RWPE1 (cell line): ENCODE measurements at regions of chr7 and their contacts with region 1.

Region 1: DNA sequence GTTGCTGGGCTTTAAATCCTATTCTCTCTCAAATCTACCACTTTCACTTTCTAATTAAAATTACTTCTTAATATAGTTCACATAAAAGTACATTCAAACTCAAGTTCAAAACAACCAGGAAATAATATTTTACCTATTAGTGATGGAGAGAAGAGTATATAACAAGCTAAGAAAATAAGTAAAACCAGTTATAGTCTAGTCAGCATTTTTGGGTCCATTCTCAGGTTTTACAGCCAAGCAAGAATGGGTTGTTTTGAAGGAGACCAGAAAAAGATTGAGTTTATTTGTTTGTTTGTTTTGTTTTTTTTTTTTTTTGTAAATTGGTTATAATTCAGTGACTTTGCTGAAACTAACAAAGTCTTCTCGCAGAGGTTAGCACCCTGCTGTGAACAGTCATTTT is 106.3 kb upstream of the PTPRZ1 start:
- DNase-seq: no peak
- H3K27ac ChIP-seq: no peak overlapping the region
- CTCF ChIP-seq: no peak

Region 2: DNA sequence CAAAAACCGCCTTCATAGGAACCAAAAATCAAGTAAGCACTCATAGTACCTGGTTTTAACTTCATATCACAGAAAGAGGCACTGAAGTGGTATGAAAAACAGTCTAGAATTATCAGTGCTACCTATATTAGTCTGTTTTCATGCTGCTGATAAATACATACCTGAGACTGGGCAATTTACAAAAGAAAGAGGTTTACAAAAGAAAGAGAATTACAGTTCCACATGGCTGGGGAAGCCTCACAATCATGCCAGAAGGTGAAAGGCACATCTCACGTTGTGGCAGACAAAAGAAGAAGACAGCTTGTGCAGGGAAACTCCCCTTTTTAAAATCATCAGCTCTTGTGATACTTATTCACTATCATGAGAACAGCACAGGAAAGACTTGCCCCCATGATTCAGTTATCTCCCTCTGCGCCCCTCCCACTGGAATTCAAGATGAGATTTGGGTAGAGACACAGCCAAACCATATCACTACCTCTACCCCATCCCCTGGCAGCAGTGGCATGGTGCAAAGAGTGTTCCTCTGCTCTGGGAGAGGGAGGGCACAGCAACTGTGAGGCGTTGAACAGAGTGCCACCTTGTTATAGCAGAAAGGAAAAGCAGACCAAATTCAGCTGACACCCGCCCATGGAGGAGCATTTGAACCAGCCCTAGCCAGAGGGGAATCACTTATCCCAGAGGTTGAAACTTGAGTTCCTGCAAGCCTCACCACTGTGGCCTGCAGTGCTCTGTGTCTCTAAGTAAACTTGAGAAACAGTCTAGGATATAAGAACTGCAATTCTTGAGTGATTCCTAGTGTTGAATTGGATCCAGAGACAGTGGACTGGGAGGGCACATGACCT is 44.4 kb after region 1 on chr7:
- CTCF ChIA-PET with region 1: no interaction called
- POLR2A ChIA-PET with region 1: no interaction called
- DNase-seq: no peak
- H3K27ac ChIP-seq: no peak overlapping the region
- CTCF ChIP-seq: no peak

Region 3: DNA sequence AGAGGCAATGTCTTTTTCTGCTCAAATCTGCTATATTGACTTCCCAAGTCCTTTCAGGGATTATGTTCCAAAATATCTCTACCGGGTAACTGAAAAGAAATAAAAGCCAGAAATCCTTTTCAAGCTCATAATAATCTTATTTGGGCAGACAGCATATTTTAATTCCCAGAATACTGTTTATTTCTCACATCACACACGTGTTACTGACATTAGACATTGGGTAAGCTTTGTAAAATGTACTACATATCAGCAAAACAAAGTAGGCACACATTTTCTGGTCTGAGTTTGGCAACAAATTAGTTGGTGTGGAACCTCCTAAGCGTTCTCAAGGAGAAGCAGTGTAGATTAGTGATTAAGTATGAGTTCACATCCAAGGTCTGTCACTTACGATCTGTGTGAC is 95.9 kb after region 1 on chr7:
- CTCF ChIA-PET with region 1: interaction called, 12 read pairs
- POLR2A ChIA-PET with region 1: no interaction called
- DNase-seq: no peak
- H3K27ac ChIP-seq: no peak overlapping the region
- CTCF ChIP-seq: no peak